ENCODE measurements at regions of chr7 and their contacts with region 1.

Region 1: DNA sequence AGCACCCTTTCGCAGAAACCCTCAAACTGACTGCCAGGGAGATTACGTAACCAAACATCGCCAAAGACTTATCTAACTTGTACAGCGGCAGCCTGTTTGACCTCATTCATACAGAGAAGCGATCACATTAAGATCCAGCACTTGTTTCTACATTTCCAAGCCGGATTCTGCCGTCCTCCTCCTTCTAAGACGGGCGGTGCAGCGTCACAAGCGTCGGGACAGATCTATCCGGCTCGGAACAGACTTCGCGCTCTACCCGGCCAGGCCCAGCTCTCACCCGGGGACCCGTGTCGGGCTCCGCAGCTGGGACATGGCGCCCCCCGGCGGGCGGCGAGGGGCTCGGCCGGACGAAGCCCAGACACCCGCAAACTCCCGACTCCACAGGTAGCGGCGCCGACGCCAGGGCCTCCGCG is 373 bp downstream of the H2AZ2 start:
- DNase-seq: peak; percentile 75 to 94 (median 84)
- ATAC-seq: peak; percentile 54
- H3K4me3 ChIP-seq: peak overlapping the region; percentile 71
- H3K4me3 Mint-ChIP-seq: peak overlapping the region; percentile 87
- H3K27ac ChIP-seq: peak overlapping the region; percentile 91 to 99
- H3K27ac Mint-ChIP-seq: peak overlapping the region; percentile 95
- H3K4me1 ChIP-seq: peaks cover 17% of the 10 kb centered on the region
- H3K4me1 Mint-ChIP-seq: peaks cover 43% of the 10 kb centered on the region
- H3K27me3 ChIP-seq: no peaks in the 10 kb centered on the region
- H3K27me3 Mint-ChIP-seq: peaks cover 4% of the 10 kb centered on the region
- CTCF ChIP-seq: peak; percentile 68

Region 2: GRCh38 chr7:44581879-44582603 is 265.5 kb before region 1 on chr7 and contains the start of gene TMED4:
- CTCF ChIA-PET with region 1: no interaction called
- POLR2A ChIA-PET with region 1: interaction called, 65 read pairs
- intact Hi-C with region 1: loop called in 1 of 2 experiments (anchors 1 kb)
- DNase-seq: peak; percentile 100
- ATAC-seq: peak; percentile 86
- H3K4me3 ChIP-seq: peak within 1 kb of the TSS; percentile 87
- H3K4me3 Mint-ChIP-seq: peak within 1 kb of the TSS; percentile 95
- H3K27ac ChIP-seq: peak within 1 kb of the TSS; percentile 96
- H3K27ac Mint-ChIP-seq: peak within 1 kb of the TSS; percentile 97
- H3K4me1 ChIP-seq: peaks cover 32% of the 10 kb centered on the region
- H3K4me1 Mint-ChIP-seq: peaks cover 39% of the 10 kb centered on the region
- H3K27me3 ChIP-seq: no peaks in the 10 kb centered on the region
- H3K27me3 Mint-ChIP-seq: no peaks in the 10 kb centered on the region
- CTCF ChIP-seq: no peak
- total RNA-seq, gene TMED4: 134 to 138 TPM

Region 3: DNA sequence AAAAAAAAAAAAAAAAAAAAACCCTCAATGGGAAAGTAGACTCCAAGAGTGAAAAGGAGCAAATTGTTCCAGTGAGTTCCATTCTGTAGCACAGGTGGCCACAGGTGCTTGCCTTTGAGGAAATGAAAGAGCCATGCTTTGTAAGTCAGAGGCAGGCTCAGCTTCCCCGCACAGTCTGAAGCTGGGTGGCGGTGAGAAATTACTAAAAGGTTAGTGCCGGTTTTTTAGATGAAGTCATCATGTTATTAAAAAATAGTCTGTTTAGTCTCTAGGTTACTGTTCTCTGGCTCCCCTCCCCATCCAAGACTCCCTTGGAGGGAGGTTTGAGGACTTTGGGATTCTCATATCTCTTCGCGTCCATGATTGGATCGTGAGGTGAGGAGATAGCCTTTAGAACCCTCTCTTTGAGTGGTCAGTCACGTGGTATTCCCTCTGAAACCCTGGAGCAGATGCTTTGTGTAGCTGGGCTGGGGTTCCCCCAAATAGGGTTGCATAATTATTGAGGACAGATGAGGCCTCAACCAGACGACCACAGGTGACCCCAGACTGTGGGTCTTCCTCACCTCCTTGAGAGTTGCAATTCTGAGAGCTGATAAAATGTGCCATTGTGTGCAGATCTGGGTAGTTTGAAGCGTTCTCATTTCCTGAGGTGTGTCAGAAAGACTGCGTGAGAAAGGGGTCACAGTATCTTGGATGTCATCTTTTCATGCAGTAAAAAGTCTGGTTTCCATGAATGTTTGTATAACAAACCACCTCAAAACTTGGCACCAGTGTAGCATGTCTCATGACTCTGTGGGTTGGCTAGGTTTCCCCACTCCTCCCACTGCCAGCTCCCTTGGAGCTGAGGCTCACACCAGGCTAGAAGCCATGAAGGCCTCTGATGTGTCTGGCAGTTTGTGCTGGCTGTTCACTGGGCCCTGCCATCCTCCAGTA is 214.0 kb before region 1 on chr7:
- CTCF ChIA-PET with region 1: interaction called, 3 read pairs
- POLR2A ChIA-PET with region 1: interaction called, 11 read pairs
- intact Hi-C with region 1: loop called in 1 of 2 experiments (anchors 1 kb)
- DNase-seq: peak in 12 of 14 experiments; percentile 29 to 92 (median 59)
- ATAC-seq: peak; percentile 47
- H3K4me3 ChIP-seq: no peak overlapping the region
- H3K4me3 Mint-ChIP-seq: peak overlapping the region; percentile 78
- H3K27ac ChIP-seq: peak overlapping the region; percentile 87 to 91
- H3K27ac Mint-ChIP-seq: peak overlapping the region; percentile 96
- H3K4me1 ChIP-seq: peaks cover 100% of the 10 kb centered on the region
- H3K4me1 Mint-ChIP-seq: peaks cover 81% of the 10 kb centered on the region
- H3K27me3 ChIP-seq: no peaks in the 10 kb centered on the region
- H3K27me3 Mint-ChIP-seq: no peaks in the 10 kb centered on the region
- CTCF ChIP-seq: no peak

Region 4: DNA sequence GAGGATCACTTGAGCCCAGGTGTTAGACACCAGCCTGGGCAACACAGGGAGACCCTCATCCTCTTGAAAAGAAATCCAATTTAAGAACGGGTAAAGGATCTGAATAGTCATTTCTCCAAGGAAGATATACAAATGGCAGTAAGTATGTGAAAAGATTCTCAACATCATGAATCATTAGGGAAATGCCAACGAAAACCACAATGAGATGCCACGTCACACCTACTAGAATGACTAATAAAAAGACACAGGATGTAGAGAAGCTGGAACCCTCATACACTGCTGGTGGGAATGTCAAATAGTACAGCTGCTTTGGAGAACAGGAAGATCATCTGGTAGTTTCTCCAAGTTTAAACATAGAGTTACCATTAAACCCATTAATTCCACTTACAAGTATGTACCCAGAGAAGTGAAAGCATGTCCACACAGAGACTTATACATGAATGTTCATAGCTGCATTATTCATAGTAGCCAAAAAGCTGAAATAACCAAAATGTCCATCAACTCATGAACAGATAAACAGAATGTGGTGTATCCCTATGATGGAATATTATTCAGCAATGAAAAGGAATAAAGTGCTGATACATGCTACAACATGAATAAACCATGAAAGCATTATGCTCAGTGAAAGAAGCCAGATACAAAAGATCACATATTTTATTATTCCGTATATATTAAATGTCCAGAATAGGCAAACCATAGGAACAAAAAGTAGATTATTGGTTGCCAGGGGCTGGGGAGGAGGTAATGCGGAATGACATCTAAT is 111.9 kb before region 1 on chr7:
- CTCF ChIA-PET with region 1: no interaction called
- POLR2A ChIA-PET with region 1: no interaction called
- intact Hi-C with region 1: no loop called
- DNase-seq: peak in 4 of 14 experiments; percentile 52 to 80 (median 68)
- ATAC-seq: peak; percentile 68
- H3K4me3 ChIP-seq: no peak overlapping the region
- H3K4me3 Mint-ChIP-seq: no peak overlapping the region
- H3K27ac ChIP-seq: no peak overlapping the region
- H3K27ac Mint-ChIP-seq: no peak overlapping the region
- H3K4me1 ChIP-seq: peaks cover 3% of the 10 kb centered on the region
- H3K4me1 Mint-ChIP-seq: peaks cover 6% of the 10 kb centered on the region
- H3K27me3 ChIP-seq: no peaks in the 10 kb centered on the region
- H3K27me3 Mint-ChIP-seq: no peaks in the 10 kb centered on the region
- CTCF ChIP-seq: no peak

Region 5: DNA sequence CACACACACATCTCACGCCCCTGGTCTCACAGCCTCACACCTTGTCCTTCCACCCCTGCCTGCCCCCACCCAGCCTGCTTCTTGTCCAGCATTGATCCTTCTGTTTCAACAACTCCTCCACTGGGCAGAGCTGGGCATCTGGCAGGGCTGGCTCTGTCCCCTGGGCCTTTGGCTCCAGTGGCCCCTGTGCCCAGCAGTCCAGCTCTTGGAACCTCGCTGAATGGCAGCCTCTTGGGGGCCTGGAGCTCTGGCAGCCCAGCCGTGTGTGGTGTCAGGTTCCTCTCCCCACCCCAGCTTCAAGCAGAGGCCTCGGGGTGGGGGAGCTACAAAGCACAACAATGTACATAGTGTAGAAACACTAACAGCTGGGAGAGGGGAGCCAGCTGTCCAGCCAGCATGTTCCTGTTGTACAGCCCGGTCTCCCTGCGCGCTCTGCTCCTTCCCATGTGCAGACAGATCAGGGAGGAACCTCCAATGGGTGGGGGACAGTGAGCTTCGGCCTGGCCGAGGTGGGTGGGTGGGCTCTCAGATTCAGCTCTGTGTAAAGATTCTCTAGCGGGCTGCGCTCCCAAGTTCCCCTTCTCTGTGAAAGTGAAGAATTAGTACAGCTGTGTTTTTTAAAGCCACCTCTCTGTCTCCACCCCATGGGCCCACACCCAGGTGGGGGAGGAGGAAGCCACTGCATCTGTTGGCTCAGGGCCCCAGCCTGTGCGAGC is 79.4 kb before region 1 on chr7:
- CTCF ChIA-PET with region 1: no interaction called
- POLR2A ChIA-PET with region 1: interaction called, 12 read pairs
- intact Hi-C with region 1: no loop called
- DNase-seq: peak in 10 of 14 experiments; percentile 19 to 68 (median 40)
- ATAC-seq: peak; percentile 88
- H3K4me3 ChIP-seq: no peak overlapping the region
- H3K4me3 Mint-ChIP-seq: peak overlapping the region; percentile 8
- H3K27ac ChIP-seq: peak overlapping the region; percentile 14 to 48
- H3K27ac Mint-ChIP-seq: peak overlapping the region; percentile 83
- H3K4me1 ChIP-seq: peaks cover 40% of the 10 kb centered on the region
- H3K4me1 Mint-ChIP-seq: peaks cover 40% of the 10 kb centered on the region
- H3K27me3 ChIP-seq: no peaks in the 10 kb centered on the region
- H3K27me3 Mint-ChIP-seq: no peaks in the 10 kb centered on the region
- CTCF ChIP-seq: no peak

Region 6: DNA sequence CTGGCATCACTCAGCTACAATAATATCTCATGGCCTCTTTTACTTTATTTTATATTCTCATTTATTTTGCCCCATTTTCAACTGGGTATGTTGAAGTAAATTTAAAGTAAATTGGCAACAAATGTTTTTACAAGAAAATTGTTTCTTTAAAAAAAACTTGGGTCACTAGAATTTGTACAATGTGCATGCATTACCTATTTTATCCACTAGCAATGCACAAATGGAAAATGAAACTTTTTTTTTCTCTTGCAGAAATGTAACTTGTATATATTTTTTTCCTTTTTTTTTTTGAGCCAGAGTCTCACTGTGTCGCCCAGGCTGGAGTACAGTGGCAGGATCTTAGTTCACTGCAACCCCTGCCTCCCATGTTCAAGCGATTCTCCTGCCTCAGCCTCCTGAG is 10.6 kb after region 1 on chr7:
- CTCF ChIA-PET with region 1: interaction called, 26 read pairs
- POLR2A ChIA-PET with region 1: interaction called, 26 read pairs
- intact Hi-C with region 1: no loop called
- DNase-seq: no peak
- ATAC-seq: no peak
- H3K4me3 ChIP-seq: no peak overlapping the region
- H3K4me3 Mint-ChIP-seq: no peak overlapping the region
- H3K27ac ChIP-seq: no peak overlapping the region
- H3K27ac Mint-ChIP-seq: no peak overlapping the region
- H3K4me1 ChIP-seq: peaks cover 6% of the 10 kb centered on the region
- H3K4me1 Mint-ChIP-seq: peaks cover 6% of the 10 kb centered on the region
- H3K27me3 ChIP-seq: no peaks in the 10 kb centered on the region
- H3K27me3 Mint-ChIP-seq: peaks cover 5% of the 10 kb centered on the region
- CTCF ChIP-seq: no peak

Region 7: GRCh38 chr7:44999245-45000095 is 152.0 kb after region 1 on chr7:
- CTCF ChIA-PET with region 1: interaction called, 4 read pairs
- POLR2A ChIA-PET with region 1: interaction called, 9 read pairs
- intact Hi-C with region 1: loop called in 1 of 2 experiments (anchors 5 kb)
- DNase-seq: peak; percentile 98 to 100 (median 99)
- ATAC-seq: peak; percentile 79
- H3K4me3 ChIP-seq: peak overlapping the region; percentile 69
- H3K4me3 Mint-ChIP-seq: peak overlapping the region; percentile 99
- H3K27ac ChIP-seq: peak overlapping the region; percentile 76 to 78
- H3K27ac Mint-ChIP-seq: peak overlapping the region; percentile 99
- H3K4me1 ChIP-seq: peaks cover 58% of the 10 kb centered on the region
- H3K4me1 Mint-ChIP-seq: peaks cover 52% of the 10 kb centered on the region
- H3K27me3 ChIP-seq: no peaks in the 10 kb centered on the region
- H3K27me3 Mint-ChIP-seq: no peaks in the 10 kb centered on the region
- CTCF ChIP-seq: no peak

Region 8: GRCh38 chr7:45073786-45074527 is 226.4 kb after region 1 on chr7:
- CTCF ChIA-PET with region 1: no interaction called
- POLR2A ChIA-PET with region 1: no interaction called
- intact Hi-C with region 1: no loop called
- DNase-seq: no peak
- ATAC-seq: no peak
- H3K4me3 ChIP-seq: no peak overlapping the region
- H3K4me3 Mint-ChIP-seq: no peak overlapping the region
- H3K27ac ChIP-seq: peak overlapping the region in 1 of 2 donors; percentile 23
- H3K27ac Mint-ChIP-seq: no peak overlapping the region
- H3K4me1 ChIP-seq: peaks cover 11% of the 10 kb centered on the region
- H3K4me1 Mint-ChIP-seq: peaks cover 8% of the 10 kb centered on the region
- H3K27me3 ChIP-seq: no peaks in the 10 kb centered on the region
- H3K27me3 Mint-ChIP-seq: no peaks in the 10 kb centered on the region
- CTCF ChIP-seq: no peak

Measured in CD4-positive, alpha-beta T cell (primary cell).